ENCODE measurements at regions of chr1 and their contacts with region 1.

Region 1: GRCh38 chr1:161045750-161046571 is at the start of gene USF1:
- DNase-seq: peak; percentile 96
- H3K4me3 ChIP-seq: peak within 1 kb of the TSS; percentile 81
- H3K27ac ChIP-seq: peak within 1 kb of the TSS; percentile 92
- H3K4me1 ChIP-seq: peaks cover 56% of the 10 kb centered on the region
- CTCF ChIP-seq: no peak
- total RNA-seq, gene USF1: 83.1 and 97.5 TPM in 2 replicates

Region 2: DNA sequence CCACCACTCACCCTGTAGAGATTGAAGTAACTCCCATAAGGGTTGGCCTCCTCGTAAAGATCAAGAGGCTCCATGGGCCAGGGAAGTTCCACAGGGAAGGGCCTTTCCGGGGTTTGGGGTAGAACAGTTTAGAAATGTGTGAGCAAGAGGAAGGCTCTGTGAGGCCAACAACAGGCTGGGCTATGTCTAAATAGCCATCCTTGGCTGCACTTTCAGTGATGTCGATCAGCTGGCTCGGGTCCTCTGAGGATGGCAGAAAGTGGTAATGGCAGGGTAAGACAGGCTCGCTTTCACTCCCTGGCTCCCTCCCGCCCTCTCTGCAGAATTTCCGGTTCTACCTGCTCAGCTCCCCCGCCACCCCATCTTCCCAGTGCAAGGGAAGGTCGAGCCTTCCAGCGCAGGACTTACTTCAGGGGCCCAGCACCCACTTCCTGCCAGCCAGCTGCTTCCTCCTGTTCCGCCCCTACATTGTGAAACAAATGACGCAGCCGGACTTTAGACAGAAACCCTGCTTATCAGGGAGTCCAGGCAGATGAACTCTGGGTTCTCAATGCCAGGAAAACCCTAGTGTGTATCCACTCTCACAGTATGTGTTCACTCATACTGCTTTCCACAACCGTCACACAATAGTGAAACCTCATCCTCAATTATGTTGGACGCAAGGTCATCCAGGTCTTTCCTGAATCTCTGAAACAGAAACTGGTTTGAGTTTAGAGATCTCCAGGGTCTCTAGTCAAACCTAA is 32.3 kb before region 1 on chr1:
- CTCF ChIA-PET with region 1: no interaction called
- POLR2A ChIA-PET with region 1: interaction called, 7 read pairs
- intact Hi-C with region 1: loop called (anchors 1 kb)
- DNase-seq: peak; percentile 88
- H3K4me3 ChIP-seq: peak overlapping the region; percentile 60
- H3K27ac ChIP-seq: peak overlapping the region; percentile 80
- H3K4me1 ChIP-seq: peaks cover 35% of the 10 kb centered on the region
- CTCF ChIP-seq: no peak

Region 3: DNA sequence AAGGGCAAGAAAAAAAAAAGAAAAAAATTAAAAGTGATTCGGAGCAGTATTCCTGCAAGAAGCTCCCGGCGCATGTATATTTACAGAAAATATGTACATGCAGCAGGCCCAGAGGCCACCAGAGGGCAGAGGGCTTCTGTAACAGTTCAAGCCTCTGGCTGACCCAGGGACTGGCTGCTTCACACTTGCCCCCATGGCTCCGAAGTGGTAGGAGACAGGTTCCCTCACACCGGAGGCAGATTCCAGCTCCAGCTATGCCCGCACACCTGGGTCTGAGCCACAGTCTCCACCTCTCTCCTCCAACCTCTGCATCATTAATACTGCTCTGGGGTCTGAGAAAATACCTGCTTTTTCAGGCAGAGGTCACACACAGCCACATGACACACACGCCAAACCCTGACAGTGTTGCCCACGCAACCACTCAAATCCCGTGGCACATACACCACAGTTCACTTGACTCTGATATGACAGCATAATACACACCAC is 26.0 kb after region 1 on chr1:
- CTCF ChIA-PET with region 1: interaction called, 6 read pairs
- POLR2A ChIA-PET with region 1: interaction called, 42 read pairs
- intact Hi-C with region 1: loop called (anchors 1 kb)
- DNase-seq: peak; percentile 70
- H3K4me3 ChIP-seq: no peak overlapping the region
- H3K27ac ChIP-seq: no peak overlapping the region
- H3K4me1 ChIP-seq: peaks cover 26% of the 10 kb centered on the region
- CTCF ChIP-seq: peak; percentile 76

Region 4: DNA sequence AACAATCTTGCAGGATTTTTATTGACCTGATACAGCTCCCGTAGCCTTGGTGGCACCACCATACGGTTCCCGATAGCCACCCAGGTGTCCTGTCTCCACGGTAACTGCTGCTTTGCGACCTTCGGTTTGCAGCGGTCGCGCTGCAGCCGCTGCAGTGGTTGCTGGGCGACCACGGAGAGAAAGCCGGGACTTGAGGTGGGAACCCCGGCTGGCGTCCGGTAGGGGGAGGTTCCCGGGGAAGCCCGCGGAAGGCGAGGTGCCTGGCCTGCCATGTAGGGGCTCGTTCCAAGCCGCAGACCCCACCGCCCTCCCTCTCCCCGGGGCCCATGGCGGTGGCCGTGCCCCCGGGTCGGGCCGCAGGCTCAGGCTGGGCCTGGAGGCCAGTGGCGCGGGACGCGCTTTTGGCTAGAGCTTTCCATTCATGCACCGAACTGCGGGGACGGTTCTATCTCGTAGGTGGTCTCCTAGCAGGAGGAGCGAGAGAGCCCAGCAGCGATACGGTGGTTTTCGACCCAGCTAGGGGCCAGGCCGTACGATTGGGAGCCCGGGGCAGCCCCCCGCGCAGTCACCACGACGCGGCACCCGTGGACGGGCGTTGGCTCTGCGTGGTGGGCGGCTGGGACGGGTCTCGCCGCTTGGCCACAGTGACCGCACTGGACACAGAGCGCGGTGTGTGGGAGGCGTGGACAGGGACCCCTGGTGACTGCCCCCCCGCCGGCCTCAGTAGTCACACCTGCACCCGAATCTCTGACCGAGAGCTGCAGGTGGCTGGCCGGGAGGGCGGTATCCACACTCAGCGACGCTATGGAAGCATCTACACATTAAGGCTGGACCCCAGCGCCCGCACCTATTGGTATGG is 52.5 kb after region 1 on chr1 and contains the start of gene KLHDC9:
- CTCF ChIA-PET with region 1: no interaction called
- POLR2A ChIA-PET with region 1: interaction called, 9 read pairs
- intact Hi-C with region 1: loop called (anchors 2 kb)
- DNase-seq: peak; percentile 86
- H3K4me3 ChIP-seq: peak within 1 kb of the TSS; percentile 65
- H3K27ac ChIP-seq: peak within 1 kb of the TSS; percentile 50
- H3K4me1 ChIP-seq: peaks cover 29% of the 10 kb centered on the region
- CTCF ChIP-seq: no peak
- total RNA-seq, gene KLHDC9: 0.95 and 2.7 TPM in 2 replicates

Region 5: GRCh38 chr1:161117759-161118581 is 72.0 kb after region 1 on chr1 and contains the starts of genes NIT1 and PFDN2:
- CTCF ChIA-PET with region 1: no interaction called
- POLR2A ChIA-PET with region 1: interaction called, 14 read pairs
- intact Hi-C with region 1: no loop called
- DNase-seq: peak; percentile 86
- H3K4me3 ChIP-seq: peak within 1 kb of the TSS; percentile 87
- H3K27ac ChIP-seq: peak within 1 kb of the TSS; percentile 53
- H3K4me1 ChIP-seq: peaks cover 45% of the 10 kb centered on the region
- CTCF ChIP-seq: 0 out of 2 replicates have a peak, but pooled peaks have one; percentile 14
- total RNA-seq, gene NIT1: 30.2 and 42.7 TPM in 2 replicates
- total RNA-seq, gene PFDN2: 52.7 and 55.6 TPM in 2 replicates

Region 6: GRCh38 chr1:161511018-161511755 is 465.2 kb after region 1 on chr1:
- CTCF ChIA-PET with region 1: no interaction called
- POLR2A ChIA-PET with region 1: no interaction called
- intact Hi-C with region 1: no loop called
- DNase-seq: no peak
- H3K4me3 ChIP-seq: no peak overlapping the region
- H3K27ac ChIP-seq: no peak overlapping the region
- H3K4me1 ChIP-seq: no peaks in the 10 kb centered on the region
- CTCF ChIP-seq: no peak

Measured in OCI-LY7 (cell line).